B cell (primary cell): ENCODE measurements at regions of chr6 and their contacts with region 1.

Region 1: GRCh38 chr6:89819336-89820130 is at the start of gene MDN1:
- DNase-seq: peak; percentile 93
- ATAC-seq: peak; percentile 91
- H3K4me3 ChIP-seq: peak within 1 kb of the TSS; percentile 41 to 99 (median 89)
- H3K4me3 Mint-ChIP-seq: peak within 1 kb of the TSS; percentile 98
- H3K27ac ChIP-seq: peak within 1 kb of the TSS; percentile 80 to 85
- H3K27ac Mint-ChIP-seq: peak within 1 kb of the TSS; percentile 96
- H3K4me1 ChIP-seq: peaks cover 24 to 32% of the 10 kb centered on the region in 2 donors
- H3K4me1 Mint-ChIP-seq: peaks cover 29% of the 10 kb centered on the region
- H3K27me3 ChIP-seq: no peaks in the 10 kb centered on the region
- H3K27me3 Mint-ChIP-seq: no peaks in the 10 kb centered on the region
- CTCF ChIP-seq: no peak
- total RNA-seq, gene MDN1: 59.5 and 66.6 TPM in 2 replicates

Region 2: DNA sequence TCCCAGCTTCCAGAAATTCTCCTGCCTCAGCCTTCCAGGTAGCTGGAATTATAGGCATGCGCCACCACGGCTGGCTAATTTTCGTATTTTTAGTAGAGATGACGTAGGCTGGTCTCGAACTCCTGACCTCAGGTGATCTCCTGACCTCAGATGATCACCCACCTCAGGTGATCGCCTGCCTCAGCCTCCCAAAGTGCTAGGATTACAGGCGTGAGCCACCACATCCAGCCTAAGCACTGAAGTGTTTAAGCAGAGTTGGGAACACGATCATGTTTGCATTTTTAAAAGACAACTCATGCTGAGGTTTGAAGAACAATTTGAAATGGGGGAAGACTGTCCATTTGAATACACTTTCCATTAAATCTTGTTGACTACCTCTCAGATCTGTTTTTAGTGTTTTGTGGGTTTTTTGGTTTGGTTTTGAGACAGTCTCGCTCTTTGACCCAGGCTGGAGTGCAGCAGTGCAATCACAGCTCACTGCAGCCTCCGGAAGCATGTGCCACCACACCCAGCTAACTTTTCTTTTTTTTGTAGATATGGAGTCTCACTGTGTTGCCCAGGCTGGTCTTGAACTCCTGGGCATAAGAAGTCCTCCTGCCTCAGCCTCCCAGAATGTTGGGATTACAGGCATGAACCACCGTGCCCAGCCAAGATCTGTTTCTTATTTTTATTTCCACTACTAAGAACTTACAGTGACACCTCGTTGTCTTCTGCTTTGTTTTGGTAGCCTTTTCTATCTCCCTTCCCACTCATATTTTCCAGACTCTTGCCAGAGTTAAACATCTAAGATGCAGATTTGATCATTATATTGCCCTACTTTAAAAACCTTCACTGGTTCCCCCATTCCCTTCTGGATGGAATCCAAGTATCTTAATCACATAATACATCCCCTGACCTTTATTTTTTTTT is 15.6 kb after region 1 on chr6:
- CTCF ChIA-PET with region 1: interaction called, 4 read pairs
- POLR2A ChIA-PET with region 1: interaction called, 9 read pairs
- intact Hi-C with region 1: loop called (anchors 2 kb)
- DNase-seq: peak; percentile 70
- ATAC-seq: peak; percentile 83
- H3K4me3 ChIP-seq: peak overlapping the region in 2 of 5 experiments; percentile 18 to 23
- H3K4me3 Mint-ChIP-seq: peak overlapping the region; percentile 81
- H3K27ac ChIP-seq: peak overlapping the region; percentile 48 to 66
- H3K27ac Mint-ChIP-seq: peak overlapping the region; percentile 91
- H3K4me1 ChIP-seq: peaks cover 36 to 52% of the 10 kb centered on the region in 2 donors
- H3K4me1 Mint-ChIP-seq: peaks cover 55% of the 10 kb centered on the region
- H3K27me3 ChIP-seq: no peaks in the 10 kb centered on the region
- H3K27me3 Mint-ChIP-seq: no peaks in the 10 kb centered on the region
- CTCF ChIP-seq: no peak

Region 3: DNA sequence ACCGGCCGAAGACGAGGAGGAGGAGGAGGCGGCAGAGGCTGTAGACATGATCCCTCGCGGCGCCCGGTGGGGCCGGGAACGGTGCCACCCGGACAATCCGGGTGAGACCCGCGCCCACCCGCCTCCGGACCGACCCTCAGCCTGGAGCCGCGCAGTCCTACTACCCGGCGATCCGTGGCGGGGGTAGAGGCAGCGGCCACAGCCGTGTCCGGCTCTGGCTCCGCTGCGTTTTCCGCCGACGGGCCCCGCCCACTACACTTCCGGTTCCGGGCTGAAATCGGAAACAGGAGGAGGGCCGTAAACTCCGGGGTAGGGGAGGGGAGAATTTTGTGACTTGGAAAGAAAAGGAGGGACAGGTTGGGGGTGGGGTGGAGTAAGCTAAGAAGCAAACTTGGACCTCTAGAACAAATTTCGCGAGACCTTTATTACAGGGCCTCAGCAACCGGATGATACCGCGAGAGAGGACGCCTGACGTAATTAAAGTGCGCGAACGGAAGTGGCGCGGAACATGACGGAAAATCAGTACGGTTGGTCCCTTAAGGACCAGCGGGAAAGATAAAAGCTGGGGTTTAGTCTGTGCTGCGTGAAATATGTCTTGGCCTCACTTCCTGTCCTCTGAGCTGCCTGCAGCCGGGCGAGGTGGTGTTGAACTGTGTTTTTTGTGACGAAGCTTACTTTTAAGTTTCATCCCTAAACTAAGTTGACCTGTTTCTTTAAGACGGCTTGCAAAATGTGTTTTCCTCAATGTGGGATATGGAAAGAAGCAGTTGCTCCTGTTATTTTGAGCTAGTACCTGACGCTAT is 767.5 kb after region 1 on chr6 and contains the start of gene MAP3K7:
- CTCF ChIA-PET with region 1: no interaction called
- POLR2A ChIA-PET with region 1: no interaction called
- intact Hi-C with region 1: loop called (anchors 1 kb)
- DNase-seq: peak; percentile 97
- ATAC-seq: peak; percentile 85
- H3K4me3 ChIP-seq: peak within 1 kb of the TSS; percentile 91 to 98 (median 96)
- H3K4me3 Mint-ChIP-seq: peak within 1 kb of the TSS; percentile 98
- H3K27ac ChIP-seq: peak within 1 kb of the TSS; percentile 90 to 100
- H3K27ac Mint-ChIP-seq: peak within 1 kb of the TSS; percentile 100
- H3K4me1 ChIP-seq: peaks cover 15 to 30% of the 10 kb centered on the region in 2 donors
- H3K4me1 Mint-ChIP-seq: peaks cover 41% of the 10 kb centered on the region
- H3K27me3 ChIP-seq: peaks cover 0 to 6% (median 2%) of the 10 kb centered on the region in 4 experiments
- H3K27me3 Mint-ChIP-seq: peaks cover 12% of the 10 kb centered on the region
- CTCF ChIP-seq: no peak
- total RNA-seq, gene MAP3K7: 32.8 and 34.4 TPM in 2 replicates